MCF 10A (cell line): ENCODE measurements at regions of chr16 and their contacts with region 1.

Region 1: GRCh38 chr16:4506450-4506849 is 30.3 kb downstream of the HMOX2 start:
- DNase-seq: peak; percentile 74
- H3K4me3 Mint-ChIP-seq: no peak overlapping the region
- H3K27ac Mint-ChIP-seq: no peak overlapping the region
- H3K4me1 Mint-ChIP-seq: no peaks in the 10 kb centered on the region
- H3K27me3 Mint-ChIP-seq: no peaks in the 10 kb centered on the region
- CTCF ChIP-seq: peak; percentile 73

Region 2: DNA sequence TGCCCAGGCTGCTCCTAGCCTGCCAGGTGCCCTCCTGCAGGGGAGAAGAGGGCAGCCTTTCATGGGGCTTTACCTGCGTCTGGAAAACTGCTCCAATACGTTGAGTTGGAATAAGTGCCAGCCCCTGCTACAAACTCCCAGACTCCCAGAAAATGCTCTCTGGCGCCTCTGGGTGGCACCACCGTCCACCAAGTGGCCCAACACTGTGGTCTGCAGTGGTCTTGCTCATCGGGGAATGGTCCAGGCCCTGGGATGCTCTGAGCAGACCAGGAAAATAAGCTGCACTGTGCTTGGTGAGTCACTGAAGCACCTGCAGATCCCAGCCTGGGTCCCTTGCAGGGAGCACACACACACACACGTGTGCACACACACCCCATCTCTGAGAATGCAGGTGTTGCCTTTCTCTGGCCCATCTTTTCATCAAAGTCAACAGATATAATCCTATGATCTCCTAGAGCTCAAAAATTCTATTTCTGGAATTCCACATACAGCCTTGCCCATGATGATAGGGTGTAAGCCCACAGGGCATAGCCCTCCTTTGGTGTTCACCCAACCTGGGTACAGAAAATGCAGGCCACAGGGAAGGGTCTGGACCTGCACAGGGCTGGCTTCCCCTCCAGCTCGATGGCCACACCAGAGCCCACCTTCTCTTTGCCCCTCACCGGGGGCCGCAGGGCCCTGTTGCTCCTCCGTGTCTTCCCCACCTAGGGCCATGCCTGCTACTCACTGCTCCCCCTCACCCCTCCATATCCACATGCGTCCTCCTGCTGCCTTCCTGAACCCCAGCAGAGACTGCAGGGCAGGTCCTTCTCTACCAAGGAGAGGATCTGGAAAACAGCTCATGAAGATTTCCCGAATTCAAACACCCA is 11.6 kb after region 1 on chr16:
- CTCF ChIA-PET with region 1: interaction called, 23 read pairs
- POLR2A ChIA-PET with region 1: interaction called, 3 read pairs
- intact Hi-C with region 1: no loop called
- DNase-seq: peak; percentile 38
- H3K4me3 Mint-ChIP-seq: no peak overlapping the region
- H3K27ac Mint-ChIP-seq: no peak overlapping the region
- H3K4me1 Mint-ChIP-seq: no peaks in the 10 kb centered on the region
- H3K27me3 Mint-ChIP-seq: no peaks in the 10 kb centered on the region
- CTCF ChIP-seq: peak; percentile 73

Region 3: GRCh38 chr16:4550591-4550990 is 44.1 kb after region 1 on chr16:
- CTCF ChIA-PET with region 1: interaction called, 100 read pairs
- POLR2A ChIA-PET with region 1: interaction called, 5 read pairs
- intact Hi-C with region 1: loop called (anchors 1 kb)
- DNase-seq: no peak
- H3K4me3 Mint-ChIP-seq: no peak overlapping the region
- H3K27ac Mint-ChIP-seq: no peak overlapping the region
- H3K4me1 Mint-ChIP-seq: peaks cover 5% of the 10 kb centered on the region
- H3K27me3 Mint-ChIP-seq: peaks cover 27% of the 10 kb centered on the region
- CTCF ChIP-seq: no peak

Region 4: DNA sequence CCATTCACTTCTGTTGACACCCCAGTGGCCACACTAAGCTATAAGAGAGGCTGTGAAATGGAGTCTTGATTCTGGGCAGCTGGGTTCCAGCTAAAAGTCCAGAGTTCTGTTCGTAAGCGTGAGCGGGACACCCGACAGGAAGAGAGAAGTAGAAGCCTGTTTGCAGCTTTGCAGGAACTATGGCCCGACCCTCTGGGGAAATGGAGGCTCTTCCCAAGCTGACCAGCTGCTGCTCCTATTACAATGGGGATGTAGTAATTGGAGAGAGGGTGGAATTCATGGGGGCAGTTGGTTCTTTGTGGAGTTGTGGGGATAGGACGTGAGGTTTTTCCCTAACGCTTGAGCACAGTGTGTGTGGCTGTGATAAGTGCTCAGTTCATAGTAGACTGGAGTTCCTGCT is 79.8 kb after region 1 on chr16:
- CTCF ChIA-PET with region 1: interaction called, 86 read pairs
- POLR2A ChIA-PET with region 1: interaction called, 3 read pairs
- intact Hi-C with region 1: loop called (anchors 1 kb)
- DNase-seq: no peak
- H3K4me3 Mint-ChIP-seq: no peak overlapping the region
- H3K27ac Mint-ChIP-seq: no peak overlapping the region
- H3K4me1 Mint-ChIP-seq: peaks cover 7% of the 10 kb centered on the region
- H3K27me3 Mint-ChIP-seq: no peaks in the 10 kb centered on the region
- CTCF ChIP-seq: no peak

Region 5: GRCh38 chr16:4616047-4616811 is 109.8 kb after region 1 on chr16:
- CTCF ChIA-PET with region 1: interaction called, 6 read pairs
- POLR2A ChIA-PET with region 1: interaction called, 23 read pairs
- intact Hi-C with region 1: loop called (anchors 1 kb)
- DNase-seq: peak; percentile 100
- H3K4me3 Mint-ChIP-seq: peak overlapping the region; percentile 85
- H3K27ac Mint-ChIP-seq: peak overlapping the region; percentile 98
- H3K4me1 Mint-ChIP-seq: peaks cover 18% of the 10 kb centered on the region
- H3K27me3 Mint-ChIP-seq: no peaks in the 10 kb centered on the region
- CTCF ChIP-seq: peak; percentile 33